Posterior vena cava (tissue), 2 donors: ENCODE measurements at regions of chr15 and their contacts with region 1.

Region 1: GRCh38 chr15:25548600-25548999 is 109.8 kb upstream of the UBE3A start:
- DNase-seq: no peak

Region 2: DNA sequence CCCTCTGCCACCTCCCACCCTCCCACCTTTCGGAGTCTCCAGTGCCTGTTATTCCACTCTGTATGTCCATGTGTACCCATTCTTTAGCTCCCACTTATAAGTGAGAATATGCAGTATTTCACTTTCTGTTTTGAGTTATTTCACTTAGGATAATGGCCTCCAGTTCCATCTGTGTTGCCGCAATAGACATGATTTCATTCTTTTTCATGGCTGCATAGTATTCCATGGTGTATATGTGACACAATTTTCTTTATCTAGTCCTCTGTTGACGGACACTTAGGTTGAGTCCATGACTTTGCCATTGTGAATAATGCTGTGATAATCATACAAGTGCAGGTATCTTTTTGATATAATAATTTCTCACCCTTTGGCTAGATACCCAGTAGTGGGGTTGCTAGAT is 18.8 kb before region 1 on chr15:
- intact Hi-C with region 1: loop called in 1 of 2 experiments (anchors 2 kb)
- DNase-seq: no peak

Region 3: DNA sequence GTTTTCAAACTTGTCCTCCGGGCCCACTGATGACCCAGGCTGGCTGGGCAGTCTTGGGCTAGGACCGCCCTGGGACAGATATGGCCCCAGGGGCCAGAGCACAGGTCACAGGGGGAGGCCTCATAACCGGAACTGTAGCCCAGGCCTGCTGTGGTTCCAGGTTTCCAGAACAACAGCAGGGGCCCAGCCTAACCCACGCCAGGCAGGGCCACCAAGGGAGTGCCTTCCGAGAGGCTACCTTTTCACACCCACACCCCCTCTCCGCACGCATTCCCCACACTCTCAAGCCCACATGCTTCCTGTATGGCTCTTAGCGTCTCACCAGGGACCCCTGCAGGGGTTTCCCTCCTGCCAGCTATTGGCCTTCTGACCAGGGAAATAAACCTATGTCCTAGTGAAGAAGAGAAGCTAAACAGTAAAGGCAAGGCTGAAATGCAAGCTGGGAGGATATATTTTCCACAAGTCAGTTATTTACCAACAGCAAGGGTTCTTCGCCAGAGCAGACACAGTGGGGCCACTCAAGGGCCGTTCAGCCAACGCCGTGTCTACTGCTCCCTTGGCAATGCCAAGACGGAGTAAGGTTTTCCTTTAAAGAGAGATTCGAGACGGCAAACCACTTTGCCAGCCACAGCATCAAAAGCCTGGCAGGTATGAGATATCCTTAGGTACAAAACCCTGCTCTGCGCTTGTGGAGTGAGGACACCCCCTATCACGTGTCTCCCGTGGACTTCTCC is 179.4 kb after region 1 on chr15:
- intact Hi-C with region 1: no loop called
- DNase-seq: no peak